CD8-positive, alpha-beta T cell (primary cell): ENCODE measurements at regions of chr15 and their contacts with region 1.

Region 1: DNA sequence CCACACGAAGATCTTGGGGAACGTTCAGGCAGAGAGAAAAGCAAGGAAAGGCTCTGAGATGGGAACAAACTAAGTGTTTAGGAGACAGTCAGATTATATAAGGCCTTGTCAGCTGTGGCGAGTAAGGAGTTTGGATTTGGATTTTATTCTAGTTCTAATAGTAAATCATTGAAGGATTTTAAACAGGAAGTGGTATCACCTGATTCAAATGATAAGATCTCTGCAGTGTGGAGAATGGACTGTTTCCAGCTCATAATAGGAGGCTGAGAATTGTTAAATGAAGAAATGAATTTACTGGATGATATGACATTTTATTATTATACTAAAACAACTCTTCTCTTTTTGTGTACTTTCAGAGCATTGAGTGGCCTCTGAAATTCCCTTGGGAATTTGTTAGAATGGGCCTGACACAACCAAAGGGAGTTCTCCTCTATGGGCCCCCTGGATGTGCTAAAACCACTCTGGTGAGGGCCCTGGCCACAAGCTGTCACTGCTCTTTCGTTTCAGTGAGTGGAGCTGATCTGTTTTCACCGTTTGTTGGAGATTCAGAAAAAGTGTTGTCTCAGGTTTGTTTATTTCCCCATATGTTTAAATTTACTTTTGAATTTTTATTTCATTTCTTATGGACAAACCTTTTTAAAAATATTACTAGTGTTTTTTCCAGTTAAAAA is 36.0 kb upstream of the GATM start:
- DNase-seq: no peak
- ATAC-seq: no peak
- H3K4me3 ChIP-seq: no peak overlapping the region
- H3K4me3 Mint-ChIP-seq: no peak overlapping the region
- H3K27ac ChIP-seq: no peak overlapping the region
- H3K27ac Mint-ChIP-seq: peak overlapping the region; percentile 37
- H3K4me1 ChIP-seq: peaks cover 18% of the 10 kb centered on the region
- H3K4me1 Mint-ChIP-seq: peaks cover 22% of the 10 kb centered on the region
- H3K27me3 ChIP-seq: no peaks in the 10 kb centered on the region
- H3K27me3 Mint-ChIP-seq: no peaks in the 10 kb centered on the region
- CTCF ChIP-seq: no peak

Region 2: GRCh38 chr15:45187894-45188830 is 226.2 kb before region 1 on chr15 and contains the start of gene SHF:
- CTCF ChIA-PET with region 1: no interaction called
- POLR2A ChIA-PET with region 1: no interaction called
- intact Hi-C with region 1: no loop called
- DNase-seq: peak; percentile 24 to 87 (median 68)
- ATAC-seq: peak; percentile 79
- H3K4me3 ChIP-seq: peak within 1 kb of the TSS; percentile 84 to 99
- H3K4me3 Mint-ChIP-seq: peak within 1 kb of the TSS; percentile 89
- H3K27ac ChIP-seq: peak within 1 kb of the TSS; percentile 71 to 73
- H3K27ac Mint-ChIP-seq: peak within 1 kb of the TSS; percentile 90
- H3K4me1 ChIP-seq: peaks cover 16% of the 10 kb centered on the region
- H3K4me1 Mint-ChIP-seq: peaks cover 26% of the 10 kb centered on the region
- H3K27me3 ChIP-seq: no peaks in the 10 kb centered on the region
- H3K27me3 Mint-ChIP-seq: no peaks in the 10 kb centered on the region
- CTCF ChIP-seq: no peak
- total RNA-seq, gene SHF: 5.0 to 5.6 TPM

Region 3: DNA sequence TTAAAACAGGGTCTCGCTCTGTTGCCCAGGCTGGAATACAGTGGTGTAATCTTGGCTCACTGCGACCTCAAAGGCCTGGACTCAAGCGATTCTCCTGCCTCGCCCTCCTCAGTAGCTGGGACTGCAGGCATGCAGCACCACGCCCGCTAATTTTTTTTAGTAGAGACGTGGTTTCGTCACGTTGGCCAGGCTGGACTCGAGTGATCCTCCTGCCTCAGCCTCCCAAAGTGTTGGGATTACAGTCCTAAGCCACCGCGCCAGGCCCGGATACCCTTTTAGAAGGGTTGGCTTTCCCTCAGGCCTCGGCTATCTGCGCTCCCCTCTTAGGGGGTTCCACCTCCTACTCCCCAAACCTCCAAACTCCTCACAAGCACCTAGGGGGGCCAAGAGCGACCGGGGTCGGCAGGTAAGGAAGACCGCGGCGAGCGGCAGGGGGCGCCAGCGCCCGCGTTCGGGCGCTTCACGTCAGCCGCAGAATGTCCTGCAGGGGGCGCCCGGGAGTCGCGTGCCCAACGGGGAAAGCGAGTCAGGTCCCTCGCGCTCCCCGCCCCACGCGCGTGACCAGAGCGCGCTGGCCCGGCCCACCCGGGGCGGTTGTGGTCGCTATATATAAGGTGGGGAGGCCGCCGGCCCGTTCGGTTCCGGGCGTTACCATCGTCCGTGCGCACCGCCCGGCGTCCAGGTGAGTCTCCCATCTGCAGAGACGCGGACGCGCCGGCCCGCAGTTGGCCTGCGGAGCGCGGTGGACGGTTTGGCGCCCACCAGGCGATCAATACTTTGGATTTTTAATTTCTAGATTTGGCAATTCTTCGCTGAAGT is 15.8 kb after region 1 on chr15:
- CTCF ChIA-PET with region 1: interaction called, 10 read pairs
- POLR2A ChIA-PET with region 1: no interaction called
- intact Hi-C with region 1: no loop called
- DNase-seq: peak; percentile 72 to 93 (median 87)
- ATAC-seq: peak; percentile 95
- H3K4me3 ChIP-seq: peak overlapping the region; percentile 43 to 45
- H3K4me3 Mint-ChIP-seq: peak overlapping the region; percentile 61
- H3K27ac ChIP-seq: no peak overlapping the region
- H3K27ac Mint-ChIP-seq: no peak overlapping the region
- H3K4me1 ChIP-seq: peaks cover 7% of the 10 kb centered on the region
- H3K4me1 Mint-ChIP-seq: peaks cover 3% of the 10 kb centered on the region
- H3K27me3 ChIP-seq: peaks cover 0 to 2% of the 10 kb centered on the region in 2 experiments
- H3K27me3 Mint-ChIP-seq: no peaks in the 10 kb centered on the region
- CTCF ChIP-seq: peak; percentile 100